A549 (cell line): ENCODE measurements at regions of chr9 and their contacts with region 1.

Region 1: GRCh38 chr9:35051069-35051967 is 21.1 kb downstream of the VCP start:
- DNase-seq: peak; percentile 46 to 52
- ATAC-seq: peak; percentile 78 to 86
- H3K4me3 ChIP-seq: no peak overlapping the region
- H3K27ac ChIP-seq: no peak overlapping the region
- H3K4me1 ChIP-seq: no peaks in the 10 kb centered on the region
- CTCF ChIP-seq: peak; percentile 52; the same call in 1 of the 3 replicates
- EP300 ChIP-seq: no peak
- POLR2A ChIP-seq: no peak
- RAD21 ChIP-seq: peak in 1 of 2 experiments; percentile 33; a peak in 3 of 5 replicates

Region 2: GRCh38 chr9:34759432-34760134 is 291.7 kb before region 1 on chr9:
- CTCF ChIA-PET with region 1: interaction called, 14 read pairs
- POLR2A ChIA-PET with region 1: no interaction called
- DNase-seq: no peak
- ATAC-seq: peak; percentile 47 to 55; a peak in 3 of 6 replicates
- H3K4me3 ChIP-seq: no peak overlapping the region
- H3K27ac ChIP-seq: no peak overlapping the region
- H3K4me1 ChIP-seq: no peaks in the 10 kb centered on the region
- CTCF ChIP-seq: no peak
- EP300 ChIP-seq: no peak
- POLR2A ChIP-seq: no peak
- RAD21 ChIP-seq: no peak

Region 3: DNA sequence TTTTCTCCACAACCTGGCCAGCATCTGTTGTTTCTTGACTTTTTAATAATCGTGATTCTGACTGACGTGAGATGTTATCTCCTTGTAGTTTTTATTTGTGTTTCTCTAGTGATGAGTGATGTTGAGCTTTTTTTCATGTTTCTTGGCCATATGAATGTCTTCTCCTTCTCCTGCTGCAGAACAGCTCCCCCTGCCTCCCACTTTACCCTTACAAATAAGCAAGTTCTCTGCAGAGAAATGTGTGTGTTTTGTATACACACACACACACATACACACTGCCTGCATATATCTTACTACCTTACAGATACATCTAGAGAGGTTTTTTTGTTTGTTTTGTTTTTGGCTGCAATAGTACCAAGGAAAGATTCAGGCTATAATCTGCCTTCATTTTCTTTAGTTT is 181.9 kb before region 1 on chr9:
- CTCF ChIA-PET with region 1: no interaction called
- POLR2A ChIA-PET with region 1: no interaction called
- DNase-seq: peak in 1 of 2 experiments; percentile 47
- ATAC-seq: no peak
- H3K4me3 ChIP-seq: no peak overlapping the region
- H3K27ac ChIP-seq: no peak overlapping the region
- H3K4me1 ChIP-seq: no peaks in the 10 kb centered on the region
- CTCF ChIP-seq: peak; percentile 20; the same call in 1 of the 3 replicates
- EP300 ChIP-seq: no peak
- POLR2A ChIP-seq: no peak
- RAD21 ChIP-seq: peak in 1 of 2 experiments; percentile 31; a peak in 1 of 5 replicates

Region 4: DNA sequence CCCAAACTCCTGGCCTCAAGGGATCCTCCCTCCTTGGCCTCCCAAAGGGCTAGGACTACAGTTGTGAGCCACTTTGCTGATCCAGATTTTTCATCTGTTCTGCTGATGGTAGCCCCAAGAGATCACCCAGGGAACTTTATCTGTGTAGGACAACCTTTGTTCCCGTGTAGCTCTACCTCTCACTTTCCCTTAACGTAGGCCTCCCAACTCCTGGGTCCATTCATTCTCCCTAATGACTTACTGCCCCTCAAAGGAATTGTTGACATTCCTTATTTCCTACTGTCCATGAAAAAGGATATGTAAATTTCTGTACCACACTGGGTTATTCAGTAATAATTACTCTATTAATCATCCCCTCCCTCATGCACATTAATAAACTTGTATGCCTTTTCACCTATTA is 144.3 kb before region 1 on chr9:
- CTCF ChIA-PET with region 1: no interaction called
- POLR2A ChIA-PET with region 1: no interaction called
- DNase-seq: no peak
- ATAC-seq: no peak
- H3K4me3 ChIP-seq: no peak overlapping the region
- H3K27ac ChIP-seq: no peak overlapping the region
- H3K4me1 ChIP-seq: no peaks in the 10 kb centered on the region
- CTCF ChIP-seq: no peak
- EP300 ChIP-seq: no peak
- POLR2A ChIP-seq: no peak
- RAD21 ChIP-seq: no peak

Region 5: GRCh38 chr9:34994260-34994899 is 56.9 kb before region 1 on chr9:
- CTCF ChIA-PET with region 1: interaction called, 11 read pairs
- POLR2A ChIA-PET with region 1: interaction called, 4 read pairs
- DNase-seq: peak; percentile 58 to 78
- ATAC-seq: peak; percentile 49 to 64; a peak in 5 of 6 replicates
- H3K4me3 ChIP-seq: no peak overlapping the region
- H3K27ac ChIP-seq: no peak overlapping the region; a peak in 1 of 6 replicates
- H3K4me1 ChIP-seq: peaks cover 39% of the 10 kb centered on the region
- CTCF ChIP-seq: peak; percentile 52
- EP300 ChIP-seq: no peak
- POLR2A ChIP-seq: no peak
- RAD21 ChIP-seq: peak; percentile 47 to 65; a peak in 4 of 5 replicates

Region 6: GRCh38 chr9:35029852-35030251 is 21.5 kb before region 1 on chr9:
- CTCF ChIA-PET with region 1: interaction called, 26 read pairs
- POLR2A ChIA-PET with region 1: no interaction called
- DNase-seq: no peak
- ATAC-seq: no peak
- H3K4me3 ChIP-seq: no peak overlapping the region
- H3K27ac ChIP-seq: no peak overlapping the region
- H3K4me1 ChIP-seq: peaks cover 22% of the 10 kb centered on the region
- CTCF ChIP-seq: no peak
- EP300 ChIP-seq: no peak
- POLR2A ChIP-seq: no peak
- RAD21 ChIP-seq: no peak

Region 7: GRCh38 chr9:35035851-35036701 is 15.2 kb before region 1 on chr9:
- CTCF ChIA-PET with region 1: interaction called, 34 read pairs
- POLR2A ChIA-PET with region 1: no interaction called
- DNase-seq: no peak
- ATAC-seq: peak in 1 of 2 experiments; percentile 25; a peak in 2 of 6 replicates
- H3K4me3 ChIP-seq: no peak overlapping the region
- H3K27ac ChIP-seq: no peak overlapping the region
- H3K4me1 ChIP-seq: no peaks in the 10 kb centered on the region
- CTCF ChIP-seq: no peak
- EP300 ChIP-seq: no peak
- POLR2A ChIP-seq: no peak
- RAD21 ChIP-seq: no peak

Region 8: DNA sequence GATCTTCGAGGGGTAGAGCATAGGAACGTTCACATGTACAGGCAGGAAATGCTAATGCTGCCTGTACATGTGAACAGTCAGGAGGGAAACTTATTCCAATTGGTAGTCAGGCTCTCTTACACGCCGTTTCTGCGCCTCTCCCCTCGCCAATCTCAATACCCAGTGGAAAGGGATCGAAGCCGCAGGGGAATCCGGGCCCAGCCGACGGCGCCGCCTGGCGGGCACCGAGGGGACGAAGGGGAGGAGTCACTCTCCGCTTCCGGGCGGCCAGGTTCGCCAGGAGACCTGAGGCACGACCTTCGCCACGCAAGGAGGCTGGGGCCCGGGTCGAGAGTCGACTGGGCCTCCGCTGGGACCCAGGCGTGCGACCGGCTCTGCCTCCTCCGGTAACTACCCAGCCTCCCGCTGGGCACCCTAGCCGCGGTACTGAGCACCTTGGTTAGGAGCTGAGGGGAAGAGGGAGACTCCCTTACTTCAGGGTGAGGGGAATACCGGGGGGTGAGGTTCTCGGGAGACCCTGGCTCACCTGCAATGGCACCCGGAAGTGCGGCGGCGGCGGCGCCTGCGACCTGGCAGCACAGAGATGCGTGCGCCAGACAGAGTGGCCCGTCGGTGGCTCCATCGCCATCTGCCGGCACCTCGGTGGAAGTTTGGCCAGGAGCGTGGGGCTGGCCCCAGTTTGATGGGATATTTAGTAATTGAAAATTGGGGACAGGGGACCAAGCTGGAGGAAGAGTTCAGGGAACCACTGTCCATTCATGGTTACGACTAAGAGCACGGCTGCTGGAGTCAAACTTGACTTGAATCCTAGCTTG is 44.9 kb after region 1 on chr9 and contains the start of gene PIGO:
- CTCF ChIA-PET with region 1: interaction called, 12 read pairs
- POLR2A ChIA-PET with region 1: no interaction called
- DNase-seq: peak; percentile 89 to 94
- ATAC-seq: peak; percentile 95 to 96
- H3K4me3 ChIP-seq: peak within 1 kb of the TSS; percentile 66
- H3K27ac ChIP-seq: peak within 1 kb of the TSS; percentile 94
- H3K4me1 ChIP-seq: peaks cover 12% of the 10 kb centered on the region
- CTCF ChIP-seq: peak; percentile 82
- EP300 ChIP-seq: no peak
- POLR2A ChIP-seq: peak; percentile 71
- RAD21 ChIP-seq: peak; percentile 49 to 58
- polyA plus RNA-seq, gene PIGO: 50.4 and 60.0 TPM in 2 replicates